Activated CD8-positive, alpha-beta memory T cell treated with anti-CD3 and anti-CD28 coated beads, Interleukin-2, amount 10 ng/mL, durations not matched to agents 7 days and 5 days (primary cell): ENCODE measurements at regions of chr7 and their contacts with region 1.

Region 1: DNA sequence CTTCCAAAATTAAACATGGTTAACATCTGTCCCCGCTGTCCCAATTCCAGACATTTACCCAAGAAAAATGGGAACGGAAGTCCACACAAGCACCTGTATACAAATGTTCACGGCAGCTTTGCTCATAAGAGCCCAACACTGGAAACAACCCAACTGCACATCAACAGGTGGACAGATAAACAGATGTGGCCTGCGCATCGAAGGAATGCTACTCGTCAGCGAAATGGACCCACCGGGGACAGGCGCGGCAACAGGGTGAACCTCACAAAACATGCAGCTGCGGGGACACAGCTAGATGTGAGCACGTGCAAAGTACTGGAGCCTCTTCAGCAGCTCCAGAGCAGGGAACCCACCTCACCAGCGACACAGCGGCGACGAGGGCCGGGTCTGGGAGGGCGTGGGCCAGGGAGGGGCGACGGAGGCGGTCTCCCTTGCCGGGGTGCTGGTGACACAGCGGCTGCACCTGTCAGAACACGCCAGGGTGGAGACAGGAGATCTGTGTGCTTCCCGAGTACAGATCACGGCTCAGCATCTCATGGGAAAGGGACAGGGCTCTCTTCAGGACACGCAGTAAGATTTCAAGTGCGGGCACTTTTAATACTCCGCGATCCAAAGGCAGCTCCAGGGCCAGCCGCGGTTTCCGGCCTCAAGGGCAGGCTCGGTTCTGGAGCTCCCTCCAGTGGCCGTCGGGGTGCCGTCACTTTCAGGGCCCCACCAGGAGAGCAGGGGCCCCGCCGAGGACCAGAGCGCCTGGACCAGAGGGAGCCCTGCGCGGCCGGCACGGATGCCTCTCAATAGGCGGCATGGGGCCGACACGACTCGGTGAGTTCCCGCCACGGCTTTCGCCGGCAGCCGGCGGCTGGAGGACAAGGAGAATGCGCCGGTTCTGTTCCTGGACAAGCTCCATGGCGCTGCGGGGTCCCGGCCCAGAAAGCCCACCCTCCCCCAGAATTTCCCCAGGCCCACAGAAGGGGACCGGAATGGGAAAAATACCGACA is 21.2 kb downstream of the GPR146 start:
- DNase-seq: peak; percentile 87
- ATAC-seq: peak; percentile 98
- H3K4me3 Mint-ChIP-seq: no peak overlapping the region
- H3K27ac Mint-ChIP-seq: no peak overlapping the region
- H3K4me1 Mint-ChIP-seq: peaks cover 2% of the 10 kb centered on the region
- H3K27me3 Mint-ChIP-seq: no peaks in the 10 kb centered on the region

Region 2: GRCh38 chr7:1020849-1021251 is 44.7 kb before region 1 on chr7:
- CTCF ChIA-PET with region 1: interaction called, 10 read pairs
- DNase-seq: no peak
- ATAC-seq: no peak
- H3K4me3 Mint-ChIP-seq: no peak overlapping the region
- H3K27ac Mint-ChIP-seq: no peak overlapping the region
- H3K4me1 Mint-ChIP-seq: peaks cover 4% of the 10 kb centered on the region
- H3K27me3 Mint-ChIP-seq: no peaks in the 10 kb centered on the region

Region 3: GRCh38 chr7:1053002-1053478 is 12.5 kb before region 1 on chr7:
- CTCF ChIA-PET with region 1: interaction called, 46 read pairs
- DNase-seq: no peak
- ATAC-seq: no peak
- H3K4me3 Mint-ChIP-seq: no peak overlapping the region
- H3K27ac Mint-ChIP-seq: no peak overlapping the region
- H3K4me1 Mint-ChIP-seq: peaks cover 18% of the 10 kb centered on the region
- H3K27me3 Mint-ChIP-seq: no peaks in the 10 kb centered on the region

Region 4: DNA sequence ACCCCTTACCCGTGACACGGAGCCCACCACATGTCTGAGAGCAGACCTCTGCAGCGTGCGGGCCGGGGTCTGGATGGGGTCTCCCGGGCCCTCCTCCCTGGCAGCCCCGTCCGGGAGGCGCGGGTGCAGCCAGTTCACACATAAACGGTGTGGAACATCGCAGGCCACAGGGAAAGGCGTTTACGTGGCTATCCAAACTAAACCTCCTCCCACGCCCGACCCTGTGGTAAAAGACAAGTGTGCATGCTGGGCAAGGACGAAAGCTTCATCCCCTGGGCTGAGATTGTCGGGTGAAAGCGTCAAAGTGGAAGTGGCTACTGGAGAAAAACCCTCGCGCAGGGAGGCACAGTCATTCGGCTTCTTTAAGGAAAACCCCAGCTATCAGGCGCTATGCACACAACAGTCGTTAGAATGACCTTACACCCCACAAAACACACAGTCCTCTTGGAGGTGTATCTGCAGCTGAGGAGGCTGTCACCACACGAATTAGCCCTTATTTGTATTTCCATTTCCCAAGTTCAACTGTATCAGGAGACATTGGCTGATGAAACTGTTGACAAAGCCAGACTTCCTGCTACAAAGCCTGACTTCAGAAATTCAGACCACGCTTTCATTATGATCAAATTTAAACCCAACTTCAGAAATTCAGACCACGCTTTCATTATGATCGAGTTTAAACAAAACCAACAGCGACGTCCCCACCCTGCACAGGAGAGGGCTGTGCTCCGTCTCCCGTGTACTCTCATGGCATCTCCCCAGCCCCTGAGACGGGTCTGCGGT is 37.6 kb after region 1 on chr7:
- CTCF ChIA-PET with region 1: interaction called, 17 read pairs
- DNase-seq: peak; percentile 67
- ATAC-seq: peak; percentile 79
- H3K4me3 Mint-ChIP-seq: peak overlapping the region; percentile 60
- H3K27ac Mint-ChIP-seq: peak overlapping the region; percentile 83
- H3K4me1 Mint-ChIP-seq: peaks cover 28% of the 10 kb centered on the region
- H3K27me3 Mint-ChIP-seq: no peaks in the 10 kb centered on the region

Region 5: GRCh38 chr7:1175967-1176851 is 110.6 kb after region 1 on chr7:
- CTCF ChIA-PET with region 1: interaction called, 25 read pairs
- DNase-seq: peak; percentile 90
- ATAC-seq: peak; percentile 84
- H3K4me3 Mint-ChIP-seq: peak overlapping the region; percentile 51
- H3K27ac Mint-ChIP-seq: peak overlapping the region; percentile 87
- H3K4me1 Mint-ChIP-seq: peaks cover 14% of the 10 kb centered on the region
- H3K27me3 Mint-ChIP-seq: peaks cover 15% of the 10 kb centered on the region